ENCODE measurements at regions of chr2 and their contacts with region 1.

Region 1: DNA sequence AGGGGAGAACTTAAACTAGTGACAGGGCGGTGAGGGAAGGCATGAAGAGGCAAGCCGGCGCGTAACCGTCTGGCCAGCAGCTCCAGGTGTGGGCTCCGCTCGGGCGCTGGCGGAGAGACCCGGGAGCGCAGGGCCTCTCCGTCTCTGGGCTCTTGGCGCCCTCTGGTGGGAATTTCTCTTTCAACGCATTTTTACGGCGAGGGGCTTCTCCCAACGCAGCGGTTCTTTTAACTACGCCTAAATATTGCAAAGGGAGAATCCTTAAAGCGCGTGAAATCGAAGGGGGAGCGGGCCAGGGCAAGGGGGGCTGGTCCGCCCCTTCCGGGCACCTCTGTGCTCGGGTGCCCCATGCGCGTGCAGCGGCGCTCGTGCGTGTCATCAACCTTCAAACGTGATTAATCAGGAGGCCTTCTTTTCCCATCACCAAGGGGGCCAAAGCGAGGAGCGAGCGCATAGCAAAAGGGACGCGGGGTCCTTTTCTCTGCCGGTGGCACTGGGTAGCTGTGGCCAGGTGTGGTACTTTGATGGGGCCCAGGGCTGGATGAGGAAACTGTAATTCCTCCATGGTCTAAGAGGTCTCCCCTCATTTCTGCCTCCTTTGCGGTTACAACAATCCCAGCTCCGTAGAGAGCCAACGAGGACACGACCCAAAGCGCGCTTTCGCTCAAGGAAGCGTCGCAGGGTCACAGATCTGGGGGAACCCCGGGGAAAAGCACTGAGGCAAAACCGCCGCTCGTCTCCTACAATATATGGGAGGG is 762 bp upstream of the GAD1 start:
- DNase-seq: no peak
- ATAC-seq: no peak

Region 2: DNA sequence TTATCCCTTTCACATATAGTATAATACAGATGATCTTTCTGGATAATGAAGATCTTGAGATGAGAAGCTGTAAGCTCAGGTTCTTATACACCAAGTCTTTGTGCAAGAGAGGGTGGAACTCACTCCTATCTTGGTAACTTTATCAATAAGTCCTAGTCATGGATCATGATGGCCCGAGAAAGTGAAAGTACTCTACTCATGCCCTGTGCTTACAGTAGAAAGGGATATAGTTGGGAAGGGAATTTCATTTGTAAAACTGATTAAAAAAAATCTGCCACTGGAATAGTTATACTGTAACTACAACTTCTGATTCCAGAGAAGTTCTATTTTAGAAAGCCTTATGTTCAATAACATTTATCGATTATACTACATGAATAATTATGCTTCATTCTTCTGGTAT is 586.2 kb before region 1 on chr2:
- intact Hi-C with region 1: loop called (anchors 5 kb)
- DNase-seq: no peak
- ATAC-seq: no peak

Region 3: GRCh38 chr2:170324640-170325046 is 491.3 kb before region 1 on chr2:
- intact Hi-C with region 1: loop called (anchors 5 kb)
- DNase-seq: no peak
- ATAC-seq: no peak

Region 4: GRCh38 chr2:170369894-170370293 is 446.0 kb before region 1 on chr2:
- intact Hi-C with region 1: loop called (anchors 5 kb)
- DNase-seq: no peak
- ATAC-seq: no peak

Region 5: DNA sequence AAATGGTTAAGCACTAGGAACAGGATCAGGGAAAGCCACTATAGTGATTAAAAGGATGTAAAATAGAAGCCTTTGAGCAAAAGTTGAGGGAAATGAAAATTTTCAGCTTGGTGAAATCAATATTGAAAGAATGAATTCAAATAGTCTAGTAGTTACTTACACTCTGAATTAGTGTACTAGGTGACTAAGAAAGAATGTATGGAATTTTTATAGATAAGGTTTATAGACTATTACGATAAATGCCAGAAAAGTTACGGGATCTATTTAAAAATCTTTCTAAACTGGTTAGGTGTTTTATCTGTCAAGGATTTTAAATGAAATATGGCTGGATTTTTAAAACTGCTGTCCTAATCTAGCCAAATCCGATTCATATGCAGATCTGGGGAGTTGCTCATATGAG is 429.4 kb before region 1 on chr2:
- intact Hi-C with region 1: no loop called
- DNase-seq: no peak
- ATAC-seq: no peak

Region 6: GRCh38 chr2:170409164-170409535 is 406.8 kb before region 1 on chr2:
- intact Hi-C with region 1: loop called (anchors 2 kb)
- DNase-seq: no peak
- ATAC-seq: no peak

Region 7: GRCh38 chr2:170486730-170487129 is 329.2 kb before region 1 on chr2:
- intact Hi-C with region 1: loop called (anchors 2 kb)
- DNase-seq: no peak
- ATAC-seq: no peak

Region 8: GRCh38 chr2:170715062-170715931 is 100.6 kb before region 1 on chr2 and contains the start of gene SP5:
- intact Hi-C with region 1: loop called (anchors 5 kb)
- DNase-seq: peak; percentile 75
- ATAC-seq: peak; percentile 29
- total RNA-seq, gene SP5: 0.19 TPM

Region 9: GRCh38 chr2:171260471-171261424 is 444.8 kb after region 1 on chr2:
- intact Hi-C with region 1: no loop called
- DNase-seq: no peak
- ATAC-seq: no peak